CD8-positive, alpha-beta T cell (primary cell): ENCODE measurements at regions of chr10 and their contacts with region 1.

Region 1: DNA sequence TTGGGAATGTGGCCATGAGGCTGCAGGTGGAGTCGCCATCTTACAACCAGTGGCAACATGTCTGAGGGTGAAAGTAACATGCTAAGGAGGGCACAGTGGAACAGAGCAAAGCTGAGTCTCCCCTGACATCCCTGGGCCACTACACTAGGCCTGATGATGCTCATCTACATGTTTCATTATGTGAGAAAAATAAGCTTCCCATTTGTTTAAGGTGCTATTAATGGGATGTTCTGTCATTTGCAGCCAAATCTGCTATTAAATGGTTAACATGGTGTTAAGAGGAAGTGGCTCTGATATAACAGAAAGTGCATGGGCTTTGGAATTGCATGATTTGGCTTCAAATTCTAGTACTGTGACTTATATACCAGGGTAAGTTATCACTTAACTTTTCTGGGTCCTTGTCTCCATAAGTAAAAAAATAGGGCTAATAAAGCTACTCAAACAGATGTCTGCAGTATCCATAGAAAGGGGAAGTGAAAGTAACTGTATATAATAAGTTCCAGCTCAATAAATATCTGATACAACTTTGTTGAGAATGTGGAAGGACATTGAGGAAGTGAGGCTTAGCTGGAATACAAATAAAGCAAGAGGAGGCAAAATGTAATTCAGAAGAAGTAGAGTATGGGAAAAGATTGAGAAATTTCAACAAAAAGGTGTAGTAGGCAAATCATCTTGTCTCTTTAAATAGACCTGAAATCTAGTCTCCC is 158.9 kb downstream of the RTKN2 start:
- DNase-seq: peak in 1 of 9 experiments; percentile 12
- ATAC-seq: no peak
- H3K4me3 ChIP-seq: no peak overlapping the region
- H3K4me3 Mint-ChIP-seq: no peak overlapping the region
- H3K27ac ChIP-seq: no peak overlapping the region
- H3K27ac Mint-ChIP-seq: peak overlapping the region; percentile 16
- H3K4me1 ChIP-seq: peaks cover 20% of the 10 kb centered on the region
- H3K4me1 Mint-ChIP-seq: peaks cover 29% of the 10 kb centered on the region
- H3K27me3 ChIP-seq: no peaks in the 10 kb centered on the region
- H3K27me3 Mint-ChIP-seq: no peaks in the 10 kb centered on the region
- CTCF ChIP-seq: no peak

Region 2: GRCh38 chr10:62136899-62137298 is 27.2 kb after region 1 on chr10:
- CTCF ChIA-PET with region 1: no interaction called
- POLR2A ChIA-PET with region 1: no interaction called
- intact Hi-C with region 1: loop called in 1 of 2 experiments (anchors 5 kb)
- DNase-seq: no peak
- ATAC-seq: no peak
- H3K4me3 ChIP-seq: no peak overlapping the region
- H3K4me3 Mint-ChIP-seq: no peak overlapping the region
- H3K27ac ChIP-seq: no peak overlapping the region
- H3K27ac Mint-ChIP-seq: no peak overlapping the region
- H3K4me1 ChIP-seq: no peaks in the 10 kb centered on the region
- H3K4me1 Mint-ChIP-seq: no peaks in the 10 kb centered on the region
- H3K27me3 ChIP-seq: no peaks in the 10 kb centered on the region
- H3K27me3 Mint-ChIP-seq: no peaks in the 10 kb centered on the region
- CTCF ChIP-seq: no peak